ENCODE measurements at regions of chr20 and their contacts with region 1.

Region 1: DNA sequence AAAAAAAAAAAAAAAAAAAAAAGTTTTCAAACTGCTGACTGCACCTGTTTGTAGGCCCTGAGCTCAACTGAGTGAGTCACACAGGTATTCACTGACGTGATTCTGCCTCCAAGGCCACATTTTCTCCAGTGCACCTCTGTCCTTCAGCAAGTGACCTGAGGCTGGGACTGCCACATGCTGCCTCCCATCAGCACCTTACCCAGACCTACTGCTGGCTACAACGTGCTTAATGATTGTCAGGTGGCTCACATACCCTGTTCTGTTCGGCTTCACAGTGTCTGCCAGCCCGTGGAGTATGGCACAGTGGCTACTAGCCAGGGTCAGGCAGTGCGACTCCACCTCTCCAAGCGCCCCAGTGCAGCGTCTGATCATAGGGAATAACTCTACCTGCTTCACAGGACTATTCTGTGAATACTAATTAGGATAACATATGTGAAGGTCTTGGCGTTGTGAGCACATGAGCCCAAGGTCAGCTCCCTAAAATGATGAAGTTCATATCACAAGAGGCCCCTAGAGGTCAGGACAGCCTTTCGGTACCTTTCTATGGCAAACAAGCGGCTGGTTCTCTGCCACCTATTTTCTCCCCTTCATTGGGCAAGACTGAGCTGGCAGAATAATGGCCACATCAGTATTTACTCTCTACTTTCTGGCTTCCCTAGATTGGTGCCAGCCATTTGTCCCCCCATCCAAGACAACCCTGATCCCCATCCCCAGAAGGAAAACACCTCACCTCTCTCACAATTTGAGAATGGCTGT is 28.1 kb downstream of the RIPOR3 start:
- DNase-seq: peak; percentile 83
- ATAC-seq: peak; percentile 57
- H3K4me3 ChIP-seq: no peak overlapping the region
- H3K27ac ChIP-seq: peak overlapping the region; percentile 43
- H3K4me1 ChIP-seq: peaks cover 44% of the 10 kb centered on the region
- H3K27me3 ChIP-seq: no peaks in the 10 kb centered on the region
- CTCF ChIP-seq: peak; percentile 59

Region 2: GRCh38 chr20:50546729-50547314 is 116.5 kb before region 1 on chr20:
- CTCF ChIA-PET with region 1: no interaction called
- POLR2A ChIA-PET with region 1: no interaction called
- intact Hi-C with region 1: no loop called
- DNase-seq: no peak
- ATAC-seq: no peak
- H3K4me3 ChIP-seq: no peak overlapping the region
- H3K27ac ChIP-seq: no peak overlapping the region
- H3K4me1 ChIP-seq: no peaks in the 10 kb centered on the region
- H3K27me3 ChIP-seq: no peaks in the 10 kb centered on the region
- CTCF ChIP-seq: no peak

Region 3: DNA sequence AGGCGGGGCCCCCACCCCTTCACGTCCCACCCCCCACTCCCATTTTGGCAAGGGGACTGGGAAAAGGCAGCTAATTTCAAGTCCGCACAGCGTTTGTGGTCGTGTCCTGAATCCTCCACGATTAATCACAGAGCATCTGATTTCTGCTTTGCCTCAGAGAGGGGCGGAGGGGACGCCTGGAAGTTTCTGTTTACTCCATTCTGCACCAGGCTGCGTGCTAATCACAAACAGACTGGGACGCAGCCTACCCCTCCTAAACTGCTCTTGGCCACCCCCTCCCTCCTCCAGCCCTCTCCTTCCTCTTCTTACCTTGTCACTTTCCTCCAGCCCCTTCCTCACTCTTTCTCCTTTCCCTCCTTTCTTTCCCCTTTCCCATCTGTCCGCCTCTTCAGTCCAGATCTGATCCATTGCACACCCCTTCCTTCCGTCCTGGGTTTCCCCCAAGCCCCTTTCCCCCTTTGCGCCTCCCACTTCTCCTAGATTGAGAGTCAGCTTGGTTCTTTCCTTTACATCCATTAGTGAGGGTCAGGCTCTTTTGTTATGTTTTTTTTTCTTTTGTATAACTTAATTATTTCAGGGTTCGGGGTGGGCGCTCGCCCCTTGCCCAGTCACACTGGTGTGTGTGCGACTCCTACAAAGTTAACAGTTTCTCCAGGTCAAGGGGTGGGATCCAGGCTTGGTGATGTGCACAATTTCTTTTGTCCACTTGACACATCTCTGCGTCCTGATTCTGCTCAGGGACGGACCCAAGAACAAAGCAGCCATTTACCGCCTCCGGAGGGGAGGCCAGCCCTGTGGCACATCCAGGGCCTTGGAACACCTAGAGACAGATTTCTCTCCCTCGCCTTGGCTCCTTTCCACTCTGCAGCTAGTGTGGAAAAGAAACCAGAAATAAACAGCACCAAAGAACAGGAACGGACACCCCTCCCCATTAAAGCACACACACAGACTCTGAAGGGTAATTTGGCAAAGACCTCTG is 28.6 kb after region 1 on chr20:
- CTCF ChIA-PET with region 1: interaction called, 13 read pairs
- POLR2A ChIA-PET with region 1: no interaction called
- intact Hi-C with region 1: no loop called
- DNase-seq: no peak
- ATAC-seq: no peak
- H3K4me3 ChIP-seq: no peak overlapping the region
- H3K27ac ChIP-seq: no peak overlapping the region
- H3K4me1 ChIP-seq: peaks cover 14% of the 10 kb centered on the region
- H3K27me3 ChIP-seq: no peaks in the 10 kb centered on the region
- CTCF ChIP-seq: no peak

Region 4: GRCh38 chr20:50756447-50756930 is 93.2 kb after region 1 on chr20:
- CTCF ChIA-PET with region 1: interaction called, 10 read pairs
- POLR2A ChIA-PET with region 1: no interaction called
- intact Hi-C with region 1: no loop called
- DNase-seq: no peak
- ATAC-seq: no peak
- H3K4me3 ChIP-seq: no peak overlapping the region
- H3K27ac ChIP-seq: no peak overlapping the region
- H3K4me1 ChIP-seq: peaks cover 8% of the 10 kb centered on the region
- H3K27me3 ChIP-seq: no peaks in the 10 kb centered on the region
- CTCF ChIP-seq: no peak

Region 5: DNA sequence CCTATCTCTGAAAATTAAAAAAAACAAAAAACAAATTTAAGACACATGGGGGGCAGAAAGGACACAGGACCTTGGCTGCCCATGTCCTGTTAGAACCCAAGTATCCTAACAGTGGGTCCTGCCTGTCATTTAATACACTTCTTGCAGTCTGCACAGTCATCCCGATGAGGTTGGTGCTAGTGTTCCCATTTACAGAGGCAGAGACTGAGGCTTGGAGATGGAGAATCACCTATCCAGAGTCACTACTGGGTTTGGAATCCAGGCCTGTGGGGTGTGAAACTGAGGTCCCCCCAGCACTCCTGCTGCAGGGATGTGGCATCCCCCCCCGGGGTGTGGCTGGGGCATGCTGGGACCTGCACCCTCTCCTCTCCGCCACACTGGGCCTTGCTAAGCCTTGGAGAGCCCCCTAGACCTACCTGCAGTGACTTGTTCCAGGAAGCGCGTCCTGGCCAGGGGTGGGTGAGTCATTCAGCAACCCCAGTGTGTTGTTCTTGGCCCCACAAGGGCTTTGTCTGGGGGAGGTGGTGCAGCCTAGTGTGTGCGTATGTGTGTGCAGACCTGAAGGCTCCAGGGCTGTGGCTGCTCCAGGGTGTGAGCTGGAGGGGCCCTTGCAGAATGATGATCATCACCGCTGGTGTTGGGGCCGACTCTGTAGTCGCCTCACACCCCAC is 181.3 kb after region 1 on chr20:
- CTCF ChIA-PET with region 1: no interaction called
- POLR2A ChIA-PET with region 1: no interaction called
- intact Hi-C with region 1: no loop called
- DNase-seq: peak; percentile 74
- ATAC-seq: peak; percentile 92
- H3K4me3 ChIP-seq: no peak overlapping the region
- H3K27ac ChIP-seq: no peak overlapping the region
- H3K4me1 ChIP-seq: peaks cover 9% of the 10 kb centered on the region
- H3K27me3 ChIP-seq: no peaks in the 10 kb centered on the region
- CTCF ChIP-seq: no peak

Measured in PC-3 (cell line).